HCT116 (cell line): ENCODE measurements at regions of chr14 and their contacts with region 1.

Region 1: GRCh38 chr14:93655078-93655750 is 133.1 kb downstream of the PRIMA1 start:
- DNase-seq: peak; percentile 48
- ATAC-seq: peak; percentile 90
- H3K4me3 ChIP-seq: no peak overlapping the region
- H3K27ac ChIP-seq: no peak overlapping the region
- H3K4me1 ChIP-seq: no peaks in the 10 kb centered on the region
- H3K27me3 ChIP-seq: peaks cover 12% of the 10 kb centered on the region
- CTCF ChIP-seq: peak; percentile 53 to 81 (median 71)
- POLR2A ChIP-seq: no peak
- RAD21 ChIP-seq: peak; percentile 82

Region 2: GRCh38 chr14:93788543-93789227 is 133.5 kb after region 1 on chr14:
- CTCF ChIA-PET with region 1: no interaction called
- POLR2A ChIA-PET with region 1: no interaction called
- RAD21 ChIA-PET with region 1: no interaction called
- intact Hi-C with region 1: loop called (anchors 2 kb)
- DNase-seq: no peak
- ATAC-seq: peak; percentile 87
- H3K4me3 ChIP-seq: peak overlapping the region; percentile 39 to 59
- H3K27ac ChIP-seq: peak overlapping the region; percentile 44; the same call in 1 of the 2 replicates
- H3K4me1 ChIP-seq: peaks cover 6 to 15% of the 10 kb centered on the region in 2 experiments
- H3K27me3 ChIP-seq: no peaks in the 10 kb centered on the region
- CTCF ChIP-seq: peak; percentile 25 to 43 (median 31); a peak in 2 of 6 replicates
- POLR2A ChIP-seq: peak; percentile 31
- RAD21 ChIP-seq: peak; percentile 71

Region 3: DNA sequence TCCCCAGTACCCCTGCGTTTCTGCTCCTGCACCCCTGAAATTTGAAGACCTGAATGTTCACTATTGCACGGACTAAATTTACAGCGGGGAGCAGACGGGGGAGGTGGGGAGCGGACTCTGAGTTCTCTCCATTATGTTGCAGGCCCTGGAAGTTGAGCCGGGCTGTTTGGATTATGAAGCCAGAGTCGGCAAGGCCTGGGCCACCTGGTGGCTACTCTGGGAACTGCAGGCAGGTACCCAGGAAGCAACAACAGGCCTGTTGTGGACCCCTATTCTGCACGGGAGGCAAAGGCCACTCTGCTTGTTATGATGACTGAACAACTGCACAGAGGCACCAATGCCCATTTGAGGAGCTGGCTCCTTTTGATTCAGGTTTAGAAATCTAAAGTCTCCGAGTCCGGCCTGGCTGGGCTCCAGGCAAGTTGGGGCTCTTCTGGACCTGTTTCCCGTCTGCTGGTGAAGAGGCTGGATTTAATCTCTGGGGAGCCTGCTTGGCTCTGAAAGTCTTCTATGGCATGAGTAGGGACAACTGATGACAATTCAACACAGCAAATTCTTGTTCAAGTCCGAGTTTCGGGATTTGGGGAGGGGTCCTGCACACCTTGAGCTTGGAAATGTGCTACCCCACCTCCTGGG is 237.8 kb after region 1 on chr14:
- CTCF ChIA-PET with region 1: interaction called, 4 read pairs
- POLR2A ChIA-PET with region 1: no interaction called
- RAD21 ChIA-PET with region 1: no interaction called
- intact Hi-C with region 1: loop called (anchors 1 kb)
- DNase-seq: peak; percentile 35
- ATAC-seq: peak; percentile 86
- H3K4me3 ChIP-seq: no peak overlapping the region
- H3K27ac ChIP-seq: no peak overlapping the region
- H3K4me1 ChIP-seq: peaks cover 2 to 6% of the 10 kb centered on the region in 2 experiments; a peak in 2 of 4 replicates
- H3K27me3 ChIP-seq: no peaks in the 10 kb centered on the region
- CTCF ChIP-seq: peak; percentile 66 to 100 (median 95); a peak in 5 of 6 replicates
- POLR2A ChIP-seq: no peak
- RAD21 ChIP-seq: peak; percentile 72

Region 4: DNA sequence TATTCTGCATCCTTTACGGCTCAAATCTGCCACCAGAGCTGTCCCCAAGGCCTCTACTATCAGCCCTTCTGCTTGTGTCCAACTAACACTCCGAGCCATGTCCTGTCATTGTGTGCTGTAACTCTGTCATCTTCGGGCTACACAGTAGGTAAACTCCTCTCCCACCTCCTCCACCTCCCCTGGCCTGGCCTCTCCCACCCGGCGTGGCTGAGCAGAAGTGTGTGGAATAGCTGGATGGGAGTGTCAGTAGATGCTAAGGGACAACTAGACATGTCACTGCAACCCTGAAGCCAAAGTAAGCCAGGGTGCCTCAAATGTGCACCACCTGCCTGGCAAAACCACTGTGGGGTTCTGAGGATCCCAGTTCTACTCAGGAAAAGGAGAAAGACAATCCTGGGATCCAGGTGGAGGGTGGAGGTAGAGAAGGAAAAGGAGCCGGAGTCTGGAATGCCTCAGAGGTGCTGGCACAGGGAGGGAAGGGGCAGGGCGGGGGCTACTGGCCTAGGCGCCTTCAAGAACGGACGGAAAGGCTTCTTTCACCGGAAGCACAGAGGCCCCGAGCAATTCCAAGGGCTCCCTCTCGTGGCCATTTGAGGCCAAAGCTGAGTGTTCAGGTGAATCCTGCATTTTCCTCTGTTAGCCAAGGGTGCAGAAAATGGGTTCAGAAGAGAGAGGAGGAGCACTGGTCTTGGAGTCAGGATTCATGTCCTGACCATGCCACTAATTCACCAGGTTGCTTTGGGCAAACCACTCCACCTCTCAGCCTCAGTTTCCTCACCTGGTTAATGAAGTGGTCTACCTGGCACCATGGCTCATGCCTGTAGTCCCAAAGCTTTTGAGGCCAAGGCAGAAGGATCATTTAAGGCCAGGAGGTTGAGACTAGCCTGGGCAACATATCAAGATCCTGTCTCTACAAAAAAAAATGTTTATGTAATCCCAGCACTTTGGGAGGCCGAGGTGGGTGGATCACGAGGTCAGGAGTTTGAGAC is 251.4 kb after region 1 on chr14:
- CTCF ChIA-PET with region 1: interaction called, 75 read pairs
- POLR2A ChIA-PET with region 1: no interaction called
- RAD21 ChIA-PET with region 1: interaction called in 1 of 2 experiments, 3 read pairs
- intact Hi-C with region 1: loop called (anchors 1 kb)
- DNase-seq: peak; percentile 63
- ATAC-seq: peak; percentile 94
- H3K4me3 ChIP-seq: no peak overlapping the region
- H3K27ac ChIP-seq: no peak overlapping the region
- H3K4me1 ChIP-seq: peaks cover 3 to 7% of the 10 kb centered on the region in 2 experiments; a peak in 3 of 4 replicates
- H3K27me3 ChIP-seq: no peaks in the 10 kb centered on the region
- CTCF ChIP-seq: peak; percentile 78 to 92 (median 89)
- POLR2A ChIP-seq: no peak
- RAD21 ChIP-seq: peak; percentile 80

Region 5: GRCh38 chr14:94001501-94002396 is 346.5 kb after region 1 on chr14:
- CTCF ChIA-PET with region 1: no interaction called
- POLR2A ChIA-PET with region 1: no interaction called
- RAD21 ChIA-PET with region 1: no interaction called
- intact Hi-C with region 1: loop called (anchors 10 kb)
- DNase-seq: peak; percentile 59
- ATAC-seq: peak; percentile 92
- H3K4me3 ChIP-seq: no peak overlapping the region
- H3K27ac ChIP-seq: no peak overlapping the region; the same call in 1 of the 2 replicates
- H3K4me1 ChIP-seq: peaks cover 0 to 19% of the 10 kb centered on the region in 2 experiments; a peak in 2 of 4 replicates
- H3K27me3 ChIP-seq: no peaks in the 10 kb centered on the region
- CTCF ChIP-seq: peak; percentile 94 to 97 (median 96)
- POLR2A ChIP-seq: no peak
- RAD21 ChIP-seq: peak; percentile 92

Region 6: GRCh38 chr14:94654071-94654861 is 999.1 kb after region 1 on chr14:
- CTCF ChIA-PET with region 1: no interaction called
- POLR2A ChIA-PET with region 1: no interaction called
- RAD21 ChIA-PET with region 1: no interaction called
- intact Hi-C with region 1: no loop called
- DNase-seq: no peak
- ATAC-seq: no peak
- H3K4me3 ChIP-seq: no peak overlapping the region
- H3K27ac ChIP-seq: no peak overlapping the region
- H3K4me1 ChIP-seq: no peaks in the 10 kb centered on the region
- H3K27me3 ChIP-seq: no peaks in the 10 kb centered on the region
- CTCF ChIP-seq: no peak
- POLR2A ChIP-seq: no peak
- RAD21 ChIP-seq: no peak